ENCODE measurements at regions of chr13 and their contacts with region 1.

Region 1: GRCh38 chr13:49240017-49240416 is 7.7 kb upstream of the CDADC1 start:
- DNase-seq: no peak
- H3K4me3 ChIP-seq: no peak overlapping the region
- H3K27ac ChIP-seq: no peak overlapping the region
- H3K4me1 ChIP-seq: no peaks in the 10 kb centered on the region
- H3K27me3 ChIP-seq: no peaks in the 10 kb centered on the region
- CTCF ChIP-seq: peak; percentile 49 to 78 (median 61)
- EP300 ChIP-seq: no peak
- POLR2A ChIP-seq: no peak
- RAD21 ChIP-seq: peak; percentile 65 to 75

Region 2: GRCh38 chr13:49225223-49226090 is 14.6 kb before region 1 on chr13:
- CTCF ChIA-PET with region 1: interaction called, 25 read pairs
- POLR2A ChIA-PET with region 1: no interaction called
- DNase-seq: no peak
- H3K4me3 ChIP-seq: no peak overlapping the region
- H3K27ac ChIP-seq: no peak overlapping the region
- H3K4me1 ChIP-seq: peaks cover 0 to 3% (median under 1%) of the 10 kb centered on the region in 4 experiments; a peak in 4 of 7 replicates
- H3K27me3 ChIP-seq: peaks cover 22 to 34% (median 32%) of the 10 kb centered on the region in 4 experiments
- CTCF ChIP-seq: no peak
- EP300 ChIP-seq: no peak
- POLR2A ChIP-seq: no peak
- RAD21 ChIP-seq: no peak

Measured in H1 (cell line).